ENCODE measurements at regions of chr18 and their contacts with region 1.

Region 1: DNA sequence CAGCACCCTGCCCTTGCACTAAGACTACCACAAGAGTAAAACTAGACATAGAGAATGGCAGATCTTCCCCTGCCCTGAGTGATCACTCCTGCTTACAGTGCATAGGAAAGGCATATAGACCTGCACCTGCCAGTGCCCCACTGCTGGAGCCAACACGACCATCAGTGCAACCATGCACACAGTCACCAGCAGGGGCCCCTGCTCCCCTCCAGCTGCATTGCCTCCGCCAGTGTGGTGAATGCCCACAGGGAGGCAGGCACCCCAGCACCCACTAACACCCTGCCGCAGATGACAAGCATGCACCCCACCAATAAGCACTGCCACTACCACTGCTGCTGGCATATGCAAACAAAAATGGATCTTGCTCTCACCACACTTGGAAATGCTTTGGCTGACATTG is 478.8 kb downstream of the ADCYAP1 start:
- DNase-seq: no peak
- ATAC-seq: no peak
- H3K4me3 ChIP-seq: no peak overlapping the region
- H3K27ac ChIP-seq: no peak overlapping the region
- H3K4me1 ChIP-seq: no peaks in the 10 kb centered on the region
- H3K27me3 ChIP-seq: no peaks in the 10 kb centered on the region
- CTCF ChIP-seq: no peak

Region 2: DNA sequence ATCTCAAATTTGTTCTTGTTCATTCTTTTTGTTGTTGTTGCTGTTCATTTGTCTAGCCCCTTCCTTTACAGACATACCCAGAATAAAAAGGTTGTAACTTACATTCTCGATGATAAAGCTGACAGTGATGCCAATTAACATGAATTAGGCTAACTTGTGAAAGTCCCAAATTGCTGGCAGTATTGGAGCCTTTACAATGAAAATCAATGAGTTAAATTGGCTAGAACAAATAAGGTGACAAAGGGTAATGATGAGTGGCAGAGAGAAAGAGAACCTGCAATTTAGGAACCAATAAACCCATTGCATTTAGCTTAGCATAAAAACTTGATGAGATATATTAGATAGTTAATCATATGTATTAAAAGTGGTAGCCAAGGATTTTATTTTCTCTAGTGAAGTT is 42.2 kb after region 1 on chr18:
- intact Hi-C with region 1: loop called in 1 of 10 experiments (anchors 5 kb)
- DNase-seq: no peak
- ATAC-seq: no peak
- H3K4me3 ChIP-seq: no peak overlapping the region
- H3K27ac ChIP-seq: no peak overlapping the region
- H3K4me1 ChIP-seq: no peaks in the 10 kb centered on the region
- H3K27me3 ChIP-seq: no peaks in the 10 kb centered on the region
- CTCF ChIP-seq: no peak

Measured in heart right ventricle (tissue), 16 donors.